ENCODE measurements at regions of chr7 and their contacts with region 1.

Region 1: GRCh38 chr7:116219288-116219687 is 8.9 kb downstream of the TES start:
- DNase-seq: no peak

Region 2: DNA sequence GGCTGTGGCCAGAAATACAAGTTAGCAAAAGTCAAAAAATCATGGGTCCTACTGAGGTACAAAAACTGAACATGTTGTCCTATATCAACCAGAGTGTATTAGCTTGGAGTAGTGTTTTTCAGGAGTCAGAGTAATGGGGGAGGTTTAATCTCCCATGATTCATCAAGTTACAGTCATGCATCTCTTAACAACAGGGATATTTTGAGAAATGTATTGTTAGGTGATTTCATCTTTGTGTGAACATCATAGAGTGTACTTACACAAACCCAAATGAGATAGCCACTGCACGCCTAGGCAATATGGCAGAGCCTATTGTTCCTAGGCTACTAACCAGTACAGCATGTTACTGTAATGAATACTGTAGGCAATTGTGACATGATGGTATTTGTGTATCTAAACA is 23.8 kb before region 1 on chr7:
- intact Hi-C with region 1: loop called in 1 of 2 experiments (anchors 1 kb)
- DNase-seq: no peak